SK-N-SH (cell line): ENCODE measurements at regions of chr1 and their contacts with region 1.

Region 1: DNA sequence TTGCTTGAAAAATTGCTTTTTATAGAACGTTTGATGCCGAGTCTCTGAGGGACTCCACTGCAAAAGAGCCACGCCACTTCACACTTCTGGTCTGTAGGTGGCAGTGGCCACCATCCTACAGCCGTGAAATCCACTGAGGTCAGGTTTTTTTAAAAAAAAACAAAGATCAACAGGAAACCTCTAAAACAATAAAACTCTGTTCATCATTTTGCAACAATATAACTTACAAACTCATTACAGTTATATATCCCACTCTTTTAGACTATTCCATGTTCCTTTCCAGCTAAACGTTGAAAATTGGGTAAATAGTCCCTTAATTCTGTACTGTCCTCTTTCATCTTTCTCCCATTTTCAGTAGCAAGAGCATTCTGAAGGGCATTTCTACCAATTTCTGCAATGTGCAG is 64.6 kb upstream of the FMN2 start:
- DNase-seq: peak; percentile 65
- H3K4me3 ChIP-seq: peak overlapping the region in 1 of 2 experiments; percentile 9; a peak in 1 of 4 replicates
- H3K27ac ChIP-seq: peak overlapping the region in 1 of 2 experiments; percentile 48; a peak in 2 of 4 replicates
- H3K4me1 ChIP-seq: peaks cover 17 to 22% of the 10 kb centered on the region in 2 experiments; a peak in 3 of 4 replicates
- H3K27me3 ChIP-seq: no peaks in the 10 kb centered on the region
- CTCF ChIP-seq: peak; percentile 99
- EP300 ChIP-seq: no peak
- RAD21 ChIP-seq: peak; percentile 94

Region 2: DNA sequence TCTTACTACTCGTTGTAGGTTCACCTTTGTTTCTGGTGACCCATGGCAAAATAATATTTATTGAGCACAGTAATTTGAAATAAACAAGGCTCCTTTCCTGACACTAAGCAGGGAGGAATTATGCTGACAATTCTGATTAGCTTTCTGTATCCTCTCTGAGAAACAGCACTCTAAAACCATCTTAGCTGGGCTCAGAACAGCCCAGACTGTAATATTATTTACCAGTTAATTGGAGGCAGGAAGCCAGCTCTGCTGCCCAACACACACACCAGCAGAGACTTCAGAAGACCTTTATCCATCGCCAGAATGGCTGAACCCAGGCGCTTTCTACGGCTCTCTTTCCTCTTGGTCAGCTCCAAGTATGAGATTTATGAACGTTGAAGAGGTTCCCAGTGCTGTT is 13.0 kb before region 1 on chr1:
- CTCF ChIA-PET with region 1: interaction called, 12 read pairs
- POLR2A ChIA-PET with region 1: no interaction called
- DNase-seq: peak; percentile 45
- H3K4me3 ChIP-seq: peak overlapping the region in 1 of 2 experiments; percentile 30; a peak in 1 of 4 replicates
- H3K27ac ChIP-seq: peak overlapping the region in 1 of 2 experiments; percentile 95; a peak in 2 of 4 replicates
- H3K4me1 ChIP-seq: peaks cover 0 to 14% of the 10 kb centered on the region in 2 experiments; a peak in 2 of 4 replicates
- H3K27me3 ChIP-seq: no peaks in the 10 kb centered on the region
- CTCF ChIP-seq: no peak
- EP300 ChIP-seq: peak in 1 of 2 experiments; percentile 67; a peak in 2 of 4 replicates
- RAD21 ChIP-seq: no peak

Region 3: GRCh38 chr1:240092301-240093119 is 65.4 kb after region 1 on chr1:
- CTCF ChIA-PET with region 1: interaction called, 10 read pairs
- POLR2A ChIA-PET with region 1: no interaction called
- DNase-seq: peak; percentile 88
- H3K4me3 ChIP-seq: peak overlapping the region; percentile 89 to 93
- H3K27ac ChIP-seq: peak overlapping the region; percentile 58 to 85
- H3K4me1 ChIP-seq: peaks cover 0 to 40% of the 10 kb centered on the region in 2 experiments; a peak in 2 of 4 replicates
- H3K27me3 ChIP-seq: no peaks in the 10 kb centered on the region
- CTCF ChIP-seq: peak; percentile 51
- EP300 ChIP-seq: no peak
- RAD21 ChIP-seq: no peak

Region 4: DNA sequence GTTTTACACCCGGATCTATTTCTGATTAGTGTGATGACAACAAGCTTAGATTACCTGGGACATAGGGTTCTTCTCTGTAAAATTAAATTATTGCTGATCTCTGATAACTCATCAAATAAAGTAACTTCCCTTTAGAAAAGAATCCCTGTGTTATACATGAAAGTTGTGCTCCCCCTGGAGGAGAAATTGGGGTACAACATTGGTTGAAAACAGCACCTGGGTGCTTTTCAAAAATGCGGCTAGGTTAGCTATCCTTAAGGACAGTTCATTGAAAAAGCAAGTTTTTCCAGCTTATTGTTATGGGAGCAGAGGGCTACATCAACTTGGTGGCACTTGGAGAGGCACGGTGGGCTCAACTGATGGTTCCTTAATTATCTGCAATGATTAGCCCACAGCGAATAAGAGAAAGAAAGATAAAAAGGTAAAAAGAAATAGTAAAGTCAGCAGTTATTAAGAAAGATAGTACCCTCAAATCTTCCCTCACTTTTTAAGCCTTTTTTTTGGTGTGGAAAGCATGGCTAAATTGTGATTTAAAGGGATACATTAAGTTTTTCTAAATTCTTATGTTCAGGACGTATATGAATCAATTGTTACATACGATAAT is 162.4 kb after region 1 on chr1:
- CTCF ChIA-PET with region 1: interaction called, 36 read pairs
- POLR2A ChIA-PET with region 1: no interaction called
- DNase-seq: peak; percentile 44
- H3K4me3 ChIP-seq: no peak overlapping the region; a peak in 1 of 4 replicates
- H3K27ac ChIP-seq: no peak overlapping the region; a peak in 1 of 4 replicates
- H3K4me1 ChIP-seq: peaks cover 15 to 29% of the 10 kb centered on the region in 2 experiments; a peak in 3 of 4 replicates
- H3K27me3 ChIP-seq: no peaks in the 10 kb centered on the region
- CTCF ChIP-seq: peak; percentile 91
- EP300 ChIP-seq: no peak
- RAD21 ChIP-seq: peak; percentile 74